GM12878 (cell line): ENCODE measurements at regions of chrX and their contacts with region 1.

Region 1: DNA sequence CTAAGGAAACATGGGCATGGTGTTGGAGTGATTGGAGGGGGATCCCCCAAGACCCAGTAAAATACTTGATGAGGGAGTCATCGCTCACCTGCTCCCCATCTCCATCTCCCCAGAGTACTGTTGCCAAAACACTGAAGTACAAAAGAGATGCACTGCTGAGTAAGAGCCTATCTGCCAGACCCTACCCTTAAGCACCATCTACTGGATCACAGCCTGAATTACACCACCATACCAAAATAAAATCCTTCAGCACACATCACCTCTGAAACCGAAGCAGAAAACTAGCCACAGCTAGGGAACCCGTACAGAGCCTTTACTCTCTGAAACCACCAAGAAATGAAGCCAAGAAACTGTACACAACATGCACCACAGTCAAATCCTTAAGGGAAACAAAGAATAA is 466.3 kb upstream of the ACTRT1 start:
- DNase-seq: no peak
- ATAC-seq: peak; percentile 65
- H3K4me3 ChIP-seq: no peak overlapping the region
- H3K27ac ChIP-seq: no peak overlapping the region
- H3K4me1 ChIP-seq: no peaks in the 10 kb centered on the region
- H3K27me3 ChIP-seq: no peaks in the 10 kb centered on the region
- CTCF ChIP-seq: peak; percentile 35 to 43 (median 39); a peak in 4 of 6 replicates
- EP300 ChIP-seq: no peak
- POLR2A ChIP-seq: no peak
- RAD21 ChIP-seq: peak; percentile 50

Region 2: DNA sequence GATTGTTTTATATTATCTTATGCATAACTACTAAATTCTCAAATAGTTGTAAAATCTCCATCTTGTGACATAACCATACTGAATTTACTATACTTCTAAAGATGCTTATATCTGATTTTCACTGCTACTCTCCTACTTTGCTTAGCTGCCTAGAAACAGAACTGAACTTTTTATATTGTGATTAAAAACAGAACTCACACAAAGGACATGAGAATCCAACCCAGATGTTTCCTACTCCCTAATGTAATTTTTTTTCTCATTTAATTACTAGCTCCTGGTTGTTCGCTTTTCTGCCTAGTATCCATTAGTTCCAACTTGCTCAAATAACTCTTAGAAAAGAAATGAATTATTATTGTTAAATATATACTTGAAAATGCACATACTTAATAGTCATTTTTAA is 182.8 kb before region 1 on chrX:
- CTCF ChIA-PET with region 1: no interaction called
- POLR2A ChIA-PET with region 1: no interaction called
- RAD21 ChIA-PET with region 1: no interaction called
- SMC1A ChIA-PET with region 1: no interaction called
- in situ Hi-C with region 1: no loop called
- intact Hi-C with region 1: no loop called
- DNase-seq: no peak
- ATAC-seq: no peak
- H3K4me3 ChIP-seq: no peak overlapping the region
- H3K27ac ChIP-seq: no peak overlapping the region
- H3K4me1 ChIP-seq: no peaks in the 10 kb centered on the region
- H3K27me3 ChIP-seq: no peaks in the 10 kb centered on the region
- CTCF ChIP-seq: no peak
- EP300 ChIP-seq: no peak
- POLR2A ChIP-seq: no peak
- RAD21 ChIP-seq: no peak

Region 3: GRCh38 chrX:128975745-128976144 is 457.2 kb after region 1 on chrX:
- CTCF ChIA-PET with region 1: no interaction called
- POLR2A ChIA-PET with region 1: no interaction called
- RAD21 ChIA-PET with region 1: no interaction called
- SMC1A ChIA-PET with region 1: no interaction called
- in situ Hi-C with region 1: no loop called
- intact Hi-C with region 1: loop called (anchors 5 kb)
- DNase-seq: no peak
- ATAC-seq: peak; percentile 74
- H3K4me3 ChIP-seq: no peak overlapping the region
- H3K27ac ChIP-seq: no peak overlapping the region
- H3K4me1 ChIP-seq: no peaks in the 10 kb centered on the region
- H3K27me3 ChIP-seq: no peaks in the 10 kb centered on the region
- CTCF ChIP-seq: peak; percentile 66 to 77 (median 75)
- EP300 ChIP-seq: no peak
- POLR2A ChIP-seq: no peak
- RAD21 ChIP-seq: peak; percentile 72

Region 4: GRCh38 chrX:129077424-129078170 is 559.1 kb after region 1 on chrX:
- CTCF ChIA-PET with region 1: no interaction called
- POLR2A ChIA-PET with region 1: no interaction called
- RAD21 ChIA-PET with region 1: no interaction called
- SMC1A ChIA-PET with region 1: no interaction called
- in situ Hi-C with region 1: no loop called
- intact Hi-C with region 1: no loop called
- DNase-seq: no peak
- ATAC-seq: no peak
- H3K4me3 ChIP-seq: no peak overlapping the region
- H3K27ac ChIP-seq: no peak overlapping the region
- H3K4me1 ChIP-seq: no peaks in the 10 kb centered on the region
- H3K27me3 ChIP-seq: no peaks in the 10 kb centered on the region
- CTCF ChIP-seq: no peak
- EP300 ChIP-seq: no peak
- POLR2A ChIP-seq: no peak
- RAD21 ChIP-seq: no peak